ENCODE measurements at regions of chr19 and their contacts with region 1.

Region 1: GRCh38 chr19:14487370-14488125 is 8.4 kb downstream of the GIPC1 start:
- DNase-seq: no peak
- ATAC-seq: no peak
- H3K4me3 ChIP-seq: no peak overlapping the region
- H3K4me3 Mint-ChIP-seq: no peak overlapping the region
- H3K27ac ChIP-seq: no peak overlapping the region
- H3K27ac Mint-ChIP-seq: no peak overlapping the region
- H3K4me1 ChIP-seq: no peaks in the 10 kb centered on the region
- H3K4me1 Mint-ChIP-seq: no peaks in the 10 kb centered on the region
- H3K27me3 ChIP-seq: no peaks in the 10 kb centered on the region
- H3K27me3 Mint-ChIP-seq: no peaks in the 10 kb centered on the region
- CTCF ChIP-seq: no peak

Region 2: DNA sequence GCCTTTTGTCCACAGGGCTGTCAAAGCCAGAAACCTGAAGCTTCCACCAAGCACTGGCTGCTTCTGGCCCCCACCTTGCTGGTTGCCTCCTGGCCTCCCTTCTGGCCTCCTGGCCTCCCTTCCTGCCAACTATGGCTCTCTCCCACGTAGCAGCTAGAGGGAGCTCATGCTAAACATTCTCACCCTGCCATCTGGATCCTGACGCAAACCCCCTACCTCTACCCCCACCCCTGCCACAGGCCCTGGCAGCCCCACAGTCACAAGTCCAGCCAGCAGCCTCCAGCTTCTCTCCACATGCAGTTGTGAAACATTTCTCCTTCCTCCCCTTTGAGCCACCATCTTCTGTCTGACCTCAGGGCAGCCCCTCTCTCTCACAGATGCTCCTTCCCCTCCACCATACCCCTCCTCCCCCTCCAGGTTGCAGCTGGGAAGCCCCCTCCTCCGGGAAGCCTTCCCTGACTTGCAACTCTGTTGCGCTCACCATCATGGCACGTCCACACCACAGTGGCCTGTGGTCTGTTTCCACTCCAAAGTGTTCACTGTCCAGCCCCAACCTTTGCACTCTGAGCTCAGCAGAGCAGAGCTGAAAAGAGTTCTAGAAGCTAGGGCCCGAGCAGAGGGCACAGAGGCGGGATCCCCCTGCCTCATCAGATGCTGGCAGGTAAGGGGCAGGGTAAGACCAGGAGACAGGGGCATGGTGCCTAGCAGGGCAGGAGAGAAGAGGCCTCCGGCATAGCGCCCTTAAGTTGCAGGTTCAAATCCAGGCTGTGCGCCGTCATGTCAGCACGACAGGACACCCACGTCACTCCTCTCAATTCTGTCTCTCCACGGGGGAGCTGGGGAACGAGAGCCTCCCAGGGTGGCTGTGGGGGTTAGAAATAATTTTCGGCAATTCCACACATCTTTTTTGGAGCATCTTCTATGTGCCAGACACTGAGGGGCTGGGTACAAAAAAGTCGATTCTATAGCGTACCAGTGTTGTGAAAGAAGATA is 288.9 kb before region 1 on chr19:
- CTCF ChIA-PET with region 1: interaction called, 3 read pairs
- POLR2A ChIA-PET with region 1: no interaction called
- intact Hi-C with region 1: loop called (anchors 2 kb)
- DNase-seq: no peak
- ATAC-seq: no peak
- H3K4me3 ChIP-seq: no peak overlapping the region
- H3K4me3 Mint-ChIP-seq: no peak overlapping the region
- H3K27ac ChIP-seq: no peak overlapping the region
- H3K27ac Mint-ChIP-seq: no peak overlapping the region
- H3K4me1 ChIP-seq: peaks cover 0 to 3% of the 10 kb centered on the region in 2 donors
- H3K4me1 Mint-ChIP-seq: peaks cover 8% of the 10 kb centered on the region
- H3K27me3 ChIP-seq: peaks cover 0 to 6% (median 0%) of the 10 kb centered on the region in 4 experiments
- H3K27me3 Mint-ChIP-seq: peaks cover 17% of the 10 kb centered on the region
- CTCF ChIP-seq: no peak